Spleen (tissue), 13 donors: ENCODE measurements at regions of chr4 and their contacts with region 1.

Region 1: DNA sequence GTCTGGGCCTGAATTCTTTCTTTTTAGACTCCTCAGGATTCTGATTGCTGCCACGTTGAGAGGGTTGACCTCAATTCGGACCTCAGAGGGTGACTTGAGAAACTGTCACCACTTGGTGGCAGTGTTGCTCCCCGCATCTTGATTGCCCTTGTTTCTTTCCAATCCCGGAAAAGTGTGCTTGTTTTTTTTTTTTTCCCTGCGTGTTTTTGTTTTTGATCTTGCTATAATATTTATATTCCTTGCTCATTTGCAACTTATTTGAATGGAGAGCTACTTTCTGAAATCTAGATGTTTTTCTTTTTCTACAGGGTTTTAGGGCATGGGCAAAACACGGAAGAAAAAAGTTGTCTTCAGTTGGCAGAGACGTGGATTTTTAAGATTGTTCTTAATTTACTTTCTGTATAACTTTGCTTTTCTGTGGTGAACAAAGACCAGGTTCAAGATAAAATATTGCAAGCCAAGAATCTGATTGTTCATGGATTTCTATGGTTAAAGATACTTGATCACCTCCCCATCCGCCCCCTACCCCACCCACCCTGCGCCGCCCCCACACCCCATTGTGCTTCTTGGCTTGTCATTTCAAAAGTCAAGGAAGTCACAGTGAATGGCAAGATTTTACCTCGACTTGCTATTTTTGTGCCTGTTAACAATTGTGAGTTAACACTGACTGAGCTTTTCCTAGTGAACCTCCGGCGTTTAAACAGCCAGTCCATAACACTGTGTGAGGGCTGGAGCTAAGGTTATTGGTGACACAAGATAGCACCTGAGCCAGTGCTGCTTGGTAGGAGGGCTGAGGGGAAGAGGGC is 102.1 kb downstream of the PTTG2 start:
- DNase-seq: no peak
- H3K4me3 ChIP-seq: peak overlapping the region in 3 of 8 donors; percentile 6 to 47 (median 30)
- H3K27ac ChIP-seq: peak overlapping the region in 5 of 8 donors; percentile 29 to 52 (median 43)
- H3K4me1 ChIP-seq: peaks cover 0 to 16% (median 10%) of the 10 kb centered on the region in 6 donors
- H3K27me3 ChIP-seq: no peaks in the 10 kb centered on the region
- CTCF ChIP-seq: peak; percentile 70 to 91 (median 80)
- POLR2A ChIP-seq: no peak

Region 2: DNA sequence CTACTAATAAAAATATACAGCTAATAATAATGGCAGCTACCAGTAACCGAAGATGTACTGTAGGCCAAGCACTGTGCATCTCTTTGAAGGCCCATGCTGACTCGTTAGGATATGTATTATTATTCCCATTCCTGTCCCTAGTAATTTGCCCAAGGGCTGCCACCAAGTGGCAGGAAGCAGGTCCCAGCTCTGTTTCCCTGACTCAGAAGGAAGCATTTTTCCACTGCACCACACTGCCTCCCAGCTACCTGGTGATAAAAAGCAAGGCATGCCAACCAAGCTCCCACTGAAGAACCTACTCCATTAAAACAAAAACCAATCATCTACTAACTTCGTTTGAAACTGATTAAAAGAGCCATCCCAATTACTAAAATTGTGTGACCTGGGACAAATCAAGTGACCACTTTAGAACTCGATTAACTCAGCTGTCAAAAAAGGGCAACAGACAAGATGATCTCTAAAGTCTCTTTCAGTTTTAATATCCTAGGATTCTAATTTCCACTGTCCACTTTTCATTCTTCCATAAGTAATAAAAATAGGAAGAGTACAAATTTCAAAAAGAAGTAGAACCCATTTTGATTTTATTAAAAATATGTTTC is 260.1 kb before region 1 on chr4:
- intact Hi-C with region 1: no loop called
- DNase-seq: no peak
- H3K4me3 ChIP-seq: no peak overlapping the region
- H3K27ac ChIP-seq: no peak overlapping the region
- H3K4me1 ChIP-seq: peaks cover 0 to 13% (median 5%) of the 10 kb centered on the region in 6 donors
- H3K27me3 ChIP-seq: no peaks in the 10 kb centered on the region
- CTCF ChIP-seq: peak in 9 of 11 experiments; percentile 16 to 73 (median 52)
- POLR2A ChIP-seq: no peak

Region 3: GRCh38 chr4:38675146-38676121 is 613.1 kb after region 1 on chr4:
- intact Hi-C with region 1: loop called (anchors 10 kb)
- DNase-seq: no peak
- H3K4me3 ChIP-seq: peak overlapping the region in 2 of 8 donors; percentile 12 to 21
- H3K27ac ChIP-seq: peak overlapping the region; percentile 43 to 100 (median 99)
- H3K4me1 ChIP-seq: peaks cover 63 to 100% (median 86%) of the 10 kb centered on the region in 6 donors
- H3K27me3 ChIP-seq: no peaks in the 10 kb centered on the region
- CTCF ChIP-seq: peak; percentile 78 to 92 (median 89)
- POLR2A ChIP-seq: no peak

Region 4: DNA sequence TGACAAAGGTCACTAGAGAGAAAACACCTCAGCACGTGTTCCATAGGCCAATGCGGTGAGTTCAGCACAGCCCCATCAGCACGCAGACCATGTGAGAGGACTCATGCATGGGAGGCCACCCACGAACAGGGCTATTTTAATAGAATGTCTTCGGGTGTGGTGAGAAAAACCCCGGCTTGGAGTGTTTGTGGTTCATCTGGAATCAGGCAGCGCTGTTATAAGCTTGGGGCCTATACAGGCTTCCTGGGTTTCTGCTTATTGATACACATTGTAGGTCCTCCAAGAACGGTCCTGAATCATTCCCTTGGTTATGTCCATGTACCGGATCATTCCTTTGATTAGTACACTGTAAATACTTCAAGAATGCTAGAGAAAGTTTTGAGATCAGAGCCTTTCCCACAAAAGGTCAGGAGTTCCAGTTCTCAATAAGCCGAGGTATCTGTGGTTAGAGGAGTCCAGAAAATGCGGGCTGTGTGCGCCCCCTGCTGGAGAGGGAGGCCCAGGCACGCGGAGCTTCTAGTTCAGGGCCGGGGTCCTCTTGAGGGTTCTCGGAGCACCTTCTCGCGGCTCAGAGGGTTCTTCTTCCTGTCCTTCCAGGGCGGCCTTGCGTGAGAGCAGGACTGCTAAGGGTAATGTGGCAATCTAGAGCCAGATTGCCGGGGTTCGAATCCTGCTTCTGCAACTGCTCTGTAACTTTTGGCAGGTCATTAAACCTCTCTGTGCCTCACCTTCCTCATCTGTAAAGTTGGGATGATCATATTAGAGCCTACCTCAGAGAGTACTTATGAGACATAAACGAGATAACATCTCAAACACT is 668.7 kb after region 1 on chr4:
- intact Hi-C with region 1: loop called (anchors 5 kb)
- DNase-seq: peak; percentile 95
- H3K4me3 ChIP-seq: no peak overlapping the region
- H3K27ac ChIP-seq: peak overlapping the region in 3 of 8 donors; percentile 1 to 22 (median 2)
- H3K4me1 ChIP-seq: peaks cover 9 to 29% (median 12%) of the 10 kb centered on the region in 6 donors
- H3K27me3 ChIP-seq: no peaks in the 10 kb centered on the region
- CTCF ChIP-seq: peak; percentile 84 to 99 (median 93)
- POLR2A ChIP-seq: no peak